ENCODE measurements at regions of chr4 and their contacts with region 1.

Region 1: DNA sequence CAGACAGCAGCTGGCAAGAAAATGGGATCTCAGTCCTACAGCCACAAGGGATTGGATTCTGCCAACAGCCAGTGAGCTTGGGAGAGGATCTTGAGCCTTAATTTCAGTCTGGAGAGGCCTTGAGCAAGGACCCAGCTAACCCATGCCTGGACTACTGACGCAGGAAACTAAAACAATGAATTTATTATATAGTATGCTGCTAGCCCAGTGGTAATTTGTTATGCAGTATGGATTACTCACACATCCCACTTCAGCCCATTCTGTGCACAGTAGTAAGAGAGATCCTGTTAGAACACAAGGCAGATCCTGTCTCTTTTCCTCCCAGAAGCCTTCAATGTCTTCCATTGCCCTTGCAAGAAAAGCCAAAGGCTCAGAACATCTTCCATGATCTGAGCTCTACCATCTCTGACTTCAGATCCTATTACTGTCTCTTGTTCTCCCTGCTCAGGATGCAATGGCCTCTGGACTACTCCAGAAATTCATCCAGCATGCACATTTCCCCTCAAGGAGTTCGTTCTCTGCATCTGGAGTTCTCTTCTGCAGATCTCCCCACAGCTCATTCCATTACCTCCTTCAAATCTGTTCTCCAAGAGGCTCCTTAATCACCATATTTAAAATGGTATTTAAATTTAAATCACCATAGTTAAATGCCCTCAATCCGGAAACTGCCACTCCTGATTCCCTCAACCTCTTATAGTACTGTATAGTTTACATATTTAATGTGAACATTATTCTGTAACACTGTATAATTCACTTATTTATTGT is 27.6 kb downstream of the SMIM20 start:
- DNase-seq: no peak
- ATAC-seq: no peak
- H3K4me3 ChIP-seq: no peak overlapping the region
- H3K4me3 Mint-ChIP-seq: no peak overlapping the region
- H3K27ac ChIP-seq: no peak overlapping the region
- H3K27ac Mint-ChIP-seq: no peak overlapping the region
- H3K4me1 ChIP-seq: peaks cover 5% of the 10 kb centered on the region in 2 donors
- H3K4me1 Mint-ChIP-seq: peaks cover 22% of the 10 kb centered on the region
- H3K27me3 ChIP-seq: no peaks in the 10 kb centered on the region
- H3K27me3 Mint-ChIP-seq: peaks cover 13% of the 10 kb centered on the region
- CTCF ChIP-seq: no peak

Region 2: DNA sequence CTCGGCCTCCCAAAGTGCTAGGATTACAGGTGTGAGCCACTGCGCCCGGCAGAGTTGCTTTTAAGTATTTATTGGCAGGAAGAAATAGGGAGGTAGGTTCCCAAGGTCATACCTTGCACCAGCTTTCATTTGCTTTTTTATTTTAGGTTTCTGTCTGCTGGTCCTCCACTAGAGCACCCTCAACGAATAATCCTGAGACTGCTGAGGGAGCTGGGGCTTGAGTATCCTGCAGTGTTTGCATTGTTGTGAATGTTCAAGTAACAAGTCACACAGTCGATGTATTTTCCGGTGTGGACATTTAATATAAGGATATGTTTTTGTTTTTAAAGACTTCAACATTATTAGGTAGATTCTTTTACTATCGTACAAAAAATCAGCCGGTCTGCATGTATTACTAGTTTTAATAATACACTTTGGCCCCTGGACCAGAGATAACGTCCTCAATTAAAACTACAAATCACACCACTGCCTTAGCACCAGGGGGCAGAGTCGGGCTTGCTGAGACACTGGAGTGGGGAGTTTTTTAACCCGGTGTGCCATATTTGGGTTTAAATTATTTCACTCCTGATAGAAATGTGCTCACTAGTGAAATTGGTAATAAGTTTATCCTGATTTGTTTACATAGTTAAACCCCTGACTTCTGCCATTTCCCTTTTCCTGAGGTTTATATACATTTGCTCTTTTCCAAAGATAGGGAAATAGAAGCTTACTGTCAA is 16.0 kb before region 1 on chr4:
- CTCF ChIA-PET with region 1: interaction called, 11 read pairs
- POLR2A ChIA-PET with region 1: no interaction called
- intact Hi-C with region 1: no loop called
- DNase-seq: peak; percentile 59
- ATAC-seq: peak; percentile 28
- H3K4me3 ChIP-seq: no peak overlapping the region
- H3K4me3 Mint-ChIP-seq: no peak overlapping the region
- H3K27ac ChIP-seq: no peak overlapping the region
- H3K27ac Mint-ChIP-seq: no peak overlapping the region
- H3K4me1 ChIP-seq: peaks cover 0 to 2% of the 10 kb centered on the region in 2 donors
- H3K4me1 Mint-ChIP-seq: peaks cover 7% of the 10 kb centered on the region
- H3K27me3 ChIP-seq: no peaks in the 10 kb centered on the region
- H3K27me3 Mint-ChIP-seq: no peaks in the 10 kb centered on the region
- CTCF ChIP-seq: peak; percentile 70

Measured in B cell (primary cell).